B cell (primary cell): ENCODE measurements at regions of chr10 and their contacts with region 1.

Region 1: DNA sequence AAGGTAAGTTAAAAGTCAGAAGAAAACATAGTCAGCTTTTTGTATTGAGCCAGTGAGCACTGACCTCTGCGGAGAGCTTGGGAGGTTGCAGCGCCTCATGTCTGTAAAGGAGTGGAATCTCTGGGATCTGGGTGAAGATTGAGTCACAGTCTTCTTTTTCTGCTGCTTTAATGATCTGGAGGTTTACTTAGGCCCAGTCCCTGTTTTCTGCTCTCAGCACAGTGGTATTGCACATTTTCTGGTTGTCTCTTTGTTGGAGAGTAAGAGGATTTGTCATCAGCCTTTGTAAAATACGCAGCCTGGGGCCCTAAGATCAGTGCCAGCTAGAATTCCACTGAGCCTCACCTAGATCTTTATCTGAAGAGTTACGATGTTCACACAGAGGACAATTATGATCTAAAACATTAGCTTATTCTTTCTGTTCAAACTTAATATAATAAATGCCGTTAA is 58.3 kb upstream of the GJD4 start:
- DNase-seq: no peak
- ATAC-seq: no peak
- H3K4me3 ChIP-seq: no peak overlapping the region
- H3K4me3 Mint-ChIP-seq: no peak overlapping the region
- H3K27ac ChIP-seq: no peak overlapping the region
- H3K27ac Mint-ChIP-seq: no peak overlapping the region
- H3K4me1 ChIP-seq: no peaks in the 10 kb centered on the region
- H3K4me1 Mint-ChIP-seq: peaks cover 2% of the 10 kb centered on the region
- H3K27me3 ChIP-seq: no peaks in the 10 kb centered on the region
- H3K27me3 Mint-ChIP-seq: no peaks in the 10 kb centered on the region
- CTCF ChIP-seq: no peak

Region 2: GRCh38 chr10:35495521-35496119 is 51.2 kb before region 1 on chr10:
- CTCF ChIA-PET with region 1: no interaction called
- POLR2A ChIA-PET with region 1: no interaction called
- intact Hi-C with region 1: loop called (anchors 10 kb)
- DNase-seq: peak; percentile 50
- ATAC-seq: peak; percentile 59
- H3K4me3 ChIP-seq: peak overlapping the region in 3 of 5 experiments; percentile 5 to 25 (median 9)
- H3K4me3 Mint-ChIP-seq: peak overlapping the region; percentile 78
- H3K27ac ChIP-seq: peak overlapping the region; percentile 58 to 72
- H3K27ac Mint-ChIP-seq: peak overlapping the region; percentile 78
- H3K4me1 ChIP-seq: peaks cover 70 to 74% of the 10 kb centered on the region in 2 donors
- H3K4me1 Mint-ChIP-seq: peaks cover 80% of the 10 kb centered on the region
- H3K27me3 ChIP-seq: no peaks in the 10 kb centered on the region
- H3K27me3 Mint-ChIP-seq: no peaks in the 10 kb centered on the region
- CTCF ChIP-seq: no peak

Region 3: GRCh38 chr10:35940141-35941041 is 393.5 kb after region 1 on chr10:
- CTCF ChIA-PET with region 1: no interaction called
- POLR2A ChIA-PET with region 1: no interaction called
- intact Hi-C with region 1: no loop called
- DNase-seq: no peak
- ATAC-seq: no peak
- H3K4me3 ChIP-seq: no peak overlapping the region
- H3K4me3 Mint-ChIP-seq: no peak overlapping the region
- H3K27ac ChIP-seq: no peak overlapping the region
- H3K27ac Mint-ChIP-seq: no peak overlapping the region
- H3K4me1 ChIP-seq: no peaks in the 10 kb centered on the region
- H3K4me1 Mint-ChIP-seq: no peaks in the 10 kb centered on the region
- H3K27me3 ChIP-seq: no peaks in the 10 kb centered on the region
- H3K27me3 Mint-ChIP-seq: no peaks in the 10 kb centered on the region
- CTCF ChIP-seq: no peak